MCF 10A (cell line): ENCODE measurements at regions of chr3 and their contacts with region 1.

Region 1: GRCh38 chr3:197501879-197502620 is 53.7 kb downstream of the BDH1 start:
- DNase-seq: peak; percentile 96
- H3K4me3 Mint-ChIP-seq: no peak overlapping the region
- H3K27ac Mint-ChIP-seq: no peak overlapping the region
- H3K4me1 Mint-ChIP-seq: peaks cover 9% of the 10 kb centered on the region
- H3K27me3 Mint-ChIP-seq: no peaks in the 10 kb centered on the region
- CTCF ChIP-seq: peak; percentile 89

Region 2: DNA sequence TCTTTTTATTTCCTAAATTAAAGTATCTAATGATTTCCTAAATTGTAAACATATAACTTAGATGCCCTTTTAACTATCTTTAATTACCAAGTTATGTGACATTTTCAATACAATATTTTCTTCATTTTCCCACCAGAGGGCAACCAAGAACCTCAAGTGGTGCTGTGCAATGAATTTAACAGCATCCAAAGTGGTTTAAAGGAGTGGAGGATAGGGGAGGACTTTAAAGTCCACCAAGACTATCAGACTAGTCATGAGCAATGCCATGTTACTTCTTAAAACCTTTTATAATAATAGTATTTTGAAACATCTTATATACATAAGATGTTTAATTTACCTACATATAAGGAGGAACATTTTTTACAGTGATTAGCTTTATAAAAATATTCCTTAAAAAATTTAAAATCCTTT is 278.0 kb before region 1 on chr3:
- CTCF ChIA-PET with region 1: interaction called, 41 read pairs
- POLR2A ChIA-PET with region 1: interaction called, 3 read pairs
- intact Hi-C with region 1: loop called (anchors 1 kb)
- DNase-seq: peak; percentile 67
- H3K4me3 Mint-ChIP-seq: no peak overlapping the region
- H3K27ac Mint-ChIP-seq: no peak overlapping the region
- H3K4me1 Mint-ChIP-seq: peaks cover 23% of the 10 kb centered on the region
- H3K27me3 Mint-ChIP-seq: no peaks in the 10 kb centered on the region
- CTCF ChIP-seq: peak; percentile 38

Region 3: GRCh38 chr3:197456261-197457091 is 45.6 kb before region 1 on chr3:
- CTCF ChIA-PET with region 1: interaction called, 3 read pairs
- POLR2A ChIA-PET with region 1: interaction called, 3 read pairs
- intact Hi-C with region 1: loop called (anchors 5 kb)
- DNase-seq: peak; percentile 85
- H3K4me3 Mint-ChIP-seq: peak overlapping the region; percentile 72
- H3K27ac Mint-ChIP-seq: peak overlapping the region; percentile 91
- H3K4me1 Mint-ChIP-seq: peaks cover 11% of the 10 kb centered on the region
- H3K27me3 Mint-ChIP-seq: no peaks in the 10 kb centered on the region
- CTCF ChIP-seq: no peak

Region 4: GRCh38 chr3:197487908-197488391 is 14.1 kb before region 1 on chr3:
- CTCF ChIA-PET with region 1: interaction called, 21 read pairs
- POLR2A ChIA-PET with region 1: interaction called, 9 read pairs
- intact Hi-C with region 1: no loop called
- DNase-seq: peak; percentile 93
- H3K4me3 Mint-ChIP-seq: peak overlapping the region; percentile 49
- H3K27ac Mint-ChIP-seq: peak overlapping the region; percentile 94
- H3K4me1 Mint-ChIP-seq: peaks cover 34% of the 10 kb centered on the region
- H3K27me3 Mint-ChIP-seq: no peaks in the 10 kb centered on the region
- CTCF ChIP-seq: no peak